WTC11 (cell line): ENCODE measurements at regions of chrX and their contacts with region 1.

Region 1: DNA sequence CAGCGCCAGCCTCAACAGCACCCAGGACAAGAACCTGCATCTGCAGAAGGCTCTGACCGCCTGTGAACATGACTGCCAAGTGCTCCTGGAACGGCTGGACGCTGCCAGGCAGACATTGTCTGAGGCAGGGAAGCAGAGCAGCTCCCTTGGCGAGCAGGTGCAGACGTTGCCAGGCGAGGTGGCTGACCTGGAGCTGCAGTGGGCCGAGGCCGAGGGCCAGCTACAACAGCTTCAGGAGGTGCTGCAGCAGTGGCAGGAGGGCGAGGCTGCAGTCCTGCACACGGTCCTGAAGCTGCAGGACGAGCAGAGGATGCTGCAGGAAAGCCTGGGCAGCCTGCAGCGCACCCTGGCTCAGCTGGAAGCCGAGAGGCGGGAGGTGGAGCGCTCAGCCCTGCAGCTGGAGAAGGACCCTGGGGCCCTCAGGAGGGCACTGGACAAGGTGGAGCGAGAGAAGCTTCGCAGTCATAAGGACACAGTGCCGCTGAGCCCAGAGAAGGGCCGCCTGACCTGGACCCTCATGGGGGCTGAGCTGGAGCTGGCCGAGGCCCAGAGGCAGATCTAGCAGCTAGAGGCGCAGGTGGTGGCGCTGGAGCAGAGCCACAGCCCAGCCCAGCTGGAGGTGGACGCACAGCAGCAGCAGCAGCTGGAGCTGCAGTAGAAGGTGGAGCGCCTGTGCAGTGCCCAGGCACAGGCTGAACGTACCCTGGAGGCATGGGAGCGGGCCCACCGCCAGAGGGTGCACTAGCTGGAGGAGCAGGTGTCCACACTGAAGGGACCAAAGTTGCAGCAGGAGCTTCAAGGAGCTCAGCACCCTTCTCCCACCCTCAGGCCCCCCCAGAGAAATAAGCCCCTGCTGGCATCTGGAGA is 16.4 kb downstream of the SMIM10L2A start:
- DNase-seq: peak; percentile 66
- ATAC-seq: peak; percentile 87
- H3K4me3 Mint-ChIP-seq: no peak overlapping the region
- H3K27ac Mint-ChIP-seq: no peak overlapping the region
- H3K4me1 Mint-ChIP-seq: no peaks in the 10 kb centered on the region
- H3K27me3 Mint-ChIP-seq: no peaks in the 10 kb centered on the region
- CTCF ChIP-seq: no peak

Region 2: GRCh38 chrX:135454816-135455215 is 16.7 kb after region 1 on chrX:
- CTCF ChIA-PET with region 1: interaction called, 14 read pairs
- POLR2A ChIA-PET with region 1: no interaction called
- DNase-seq: no peak
- ATAC-seq: peak; percentile 60; the same call in 1 of the 2 replicates
- H3K4me3 Mint-ChIP-seq: no peak overlapping the region
- H3K27ac Mint-ChIP-seq: no peak overlapping the region
- H3K4me1 Mint-ChIP-seq: peaks cover 22% of the 10 kb centered on the region
- H3K27me3 Mint-ChIP-seq: 0 out of 2 replicates have a peak, but pooled peaks cover 4% of the 10 kb centered on the region
- CTCF ChIP-seq: no peak

Region 3: DNA sequence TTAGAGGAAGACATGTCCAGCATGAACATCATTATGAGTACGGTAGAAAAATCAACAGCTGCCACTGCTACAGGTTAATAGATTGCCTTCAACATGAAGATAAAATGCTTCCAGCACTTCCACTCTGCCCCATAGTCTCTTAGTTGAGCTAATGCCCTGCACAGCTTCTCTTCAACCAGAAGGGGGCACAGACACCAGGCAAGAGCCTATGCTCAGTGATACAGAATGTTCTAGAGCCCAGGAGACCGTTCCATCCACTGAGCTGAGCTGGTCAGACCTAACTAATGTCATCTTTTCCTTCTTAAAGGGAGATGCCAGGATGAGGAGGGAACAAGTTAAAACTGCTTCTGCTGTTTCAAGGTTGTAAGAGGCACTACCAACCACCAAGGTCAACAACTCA is 25.8 kb after region 1 on chrX:
- CTCF ChIA-PET with region 1: interaction called, 11 read pairs
- POLR2A ChIA-PET with region 1: no interaction called
- DNase-seq: no peak
- ATAC-seq: peak; percentile 74
- H3K4me3 Mint-ChIP-seq: no peak overlapping the region
- H3K27ac Mint-ChIP-seq: no peak overlapping the region
- H3K4me1 Mint-ChIP-seq: peaks cover 16% of the 10 kb centered on the region
- H3K27me3 Mint-ChIP-seq: peaks cover 47% of the 10 kb centered on the region
- CTCF ChIP-seq: no peak